T-cell (primary cell): ENCODE measurements at regions of chr18 and their contacts with region 1.

Region 1: GRCh38 chr18:74081966-74082741 is 65.5 kb downstream of the FBXO15 start:
- DNase-seq: peak; percentile 44 to 80 (median 61)
- ATAC-seq: peak; percentile 91 to 97 (median 97)
- H3K4me3 ChIP-seq: peak overlapping the region in 1 of 2 donors; percentile 1
- H3K4me3 Mint-ChIP-seq: peak overlapping the region; percentile 64 to 77 (median 73)
- H3K27ac ChIP-seq: peak overlapping the region; percentile 78
- H3K27ac Mint-ChIP-seq: peak overlapping the region; percentile 95 to 96
- H3K4me1 ChIP-seq: peaks cover 11 to 21% of the 10 kb centered on the region in 2 experiments
- H3K4me1 Mint-ChIP-seq: peaks cover 17 to 19% (median 17%) of the 10 kb centered on the region in 3 donors
- H3K27me3 ChIP-seq: peaks cover 0 to 4% of the 10 kb centered on the region in 2 experiments
- H3K27me3 Mint-ChIP-seq: peaks cover 0 to 4% of the 10 kb centered on the region in 2 donors

Region 2: DNA sequence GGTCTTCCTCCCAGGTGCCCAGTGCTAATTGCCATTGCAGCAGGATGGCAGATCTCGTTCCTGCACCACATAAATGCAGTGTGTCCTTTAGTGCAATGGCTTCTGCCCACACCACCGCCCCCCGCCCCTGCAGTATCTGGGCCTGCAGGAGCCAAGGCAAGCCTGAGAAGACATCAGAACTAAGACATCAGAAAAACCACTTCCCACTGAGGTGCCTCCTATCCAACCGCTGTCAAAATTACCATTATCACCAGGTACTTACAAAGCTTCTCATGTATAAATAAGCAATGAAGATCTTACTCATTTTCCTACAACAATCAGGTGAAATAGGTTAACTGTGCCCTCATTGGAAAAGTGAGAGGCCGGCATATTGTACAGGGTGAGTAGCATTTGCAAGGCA is 163.3 kb before region 1 on chr18:
- CTCF ChIA-PET with region 1: no interaction called
- POLR2A ChIA-PET with region 1: no interaction called
- DNase-seq: no peak
- ATAC-seq: no peak
- H3K4me3 ChIP-seq: no peak overlapping the region
- H3K4me3 Mint-ChIP-seq: no peak overlapping the region
- H3K27ac ChIP-seq: no peak overlapping the region
- H3K27ac Mint-ChIP-seq: no peak overlapping the region
- H3K4me1 ChIP-seq: no peaks in the 10 kb centered on the region
- H3K4me1 Mint-ChIP-seq: no peaks in the 10 kb centered on the region
- H3K27me3 ChIP-seq: peaks cover 0 to 4% of the 10 kb centered on the region in 2 experiments
- H3K27me3 Mint-ChIP-seq: peaks cover 12 to 14% of the 10 kb centered on the region in 2 donors

Region 3: DNA sequence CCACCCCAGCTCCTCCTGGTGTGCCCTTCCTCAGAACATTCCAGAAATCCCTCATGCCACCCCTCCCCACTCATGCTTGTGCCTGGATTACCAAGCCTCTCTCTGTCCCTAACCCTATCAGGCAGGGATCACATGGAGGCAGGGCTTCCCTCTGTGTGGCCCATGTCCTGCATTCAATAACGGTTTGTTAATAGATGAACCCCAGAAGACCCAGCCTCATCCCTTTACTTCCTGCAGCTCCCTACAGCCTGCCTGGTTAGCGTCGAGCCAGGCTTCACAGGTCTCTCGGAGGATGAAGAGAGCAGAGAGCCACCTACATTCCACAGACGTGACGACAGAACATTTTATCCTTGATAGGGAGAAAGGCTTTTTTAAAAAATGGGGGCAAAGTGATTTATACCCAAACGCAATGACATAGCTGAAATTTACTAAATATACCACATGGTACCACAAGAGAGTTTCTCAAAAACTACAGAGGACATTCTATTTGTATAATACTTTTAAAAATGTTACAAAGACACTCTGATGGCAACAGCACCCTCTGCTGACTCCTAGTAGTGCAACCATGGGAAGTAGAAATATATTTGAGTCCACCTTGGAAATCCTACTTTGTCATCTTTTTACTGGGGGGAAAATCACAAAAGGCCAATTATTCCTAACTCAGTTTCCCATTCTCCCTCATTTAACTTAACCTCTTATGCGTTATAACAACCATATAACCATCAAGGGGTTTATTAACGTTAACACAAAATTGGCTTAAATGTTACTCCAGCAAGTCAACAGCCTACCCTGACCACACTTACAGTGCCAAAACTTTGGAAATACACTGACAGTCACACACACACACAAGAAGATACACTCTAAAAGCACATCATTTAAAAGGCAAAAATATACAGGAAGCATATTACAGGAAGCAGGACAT is 34.7 kb after region 1 on chr18:
- CTCF ChIA-PET with region 1: interaction called, 14 to 20 read pairs
- POLR2A ChIA-PET with region 1: no interaction called
- DNase-seq: peak in 21 of 35 experiments; percentile 3 to 59 (median 11)
- ATAC-seq: no peak
- H3K4me3 ChIP-seq: no peak overlapping the region
- H3K4me3 Mint-ChIP-seq: no peak overlapping the region
- H3K27ac ChIP-seq: no peak overlapping the region
- H3K27ac Mint-ChIP-seq: no peak overlapping the region
- H3K4me1 ChIP-seq: no peaks in the 10 kb centered on the region
- H3K4me1 Mint-ChIP-seq: peaks cover 5 to 6% (median 6%) of the 10 kb centered on the region in 3 donors
- H3K27me3 ChIP-seq: peaks cover 0 to 7% of the 10 kb centered on the region in 2 experiments
- H3K27me3 Mint-ChIP-seq: peaks cover 0 to 4% of the 10 kb centered on the region in 2 donors

Region 4: GRCh38 chr18:74242438-74243096 is 160.4 kb after region 1 on chr18:
- CTCF ChIA-PET with region 1: no interaction called
- POLR2A ChIA-PET with region 1: no interaction called
- DNase-seq: no peak
- ATAC-seq: no peak
- H3K4me3 ChIP-seq: no peak overlapping the region
- H3K4me3 Mint-ChIP-seq: no peak overlapping the region
- H3K27ac ChIP-seq: no peak overlapping the region
- H3K27ac Mint-ChIP-seq: no peak overlapping the region
- H3K4me1 ChIP-seq: no peaks in the 10 kb centered on the region
- H3K4me1 Mint-ChIP-seq: no peaks in the 10 kb centered on the region
- H3K27me3 ChIP-seq: peaks cover 0 to 12% of the 10 kb centered on the region in 2 experiments
- H3K27me3 Mint-ChIP-seq: peaks cover 9 to 14% of the 10 kb centered on the region in 2 donors

Region 5: GRCh38 chr18:74342416-74343043 is 260.4 kb after region 1 on chr18:
- CTCF ChIA-PET with region 1: interaction called, 3 to 14 read pairs
- POLR2A ChIA-PET with region 1: no interaction called
- DNase-seq: peak in 16 of 35 experiments; percentile 8 to 71 (median 19)
- ATAC-seq: peak in 1 of 4 experiments; percentile 48
- H3K4me3 ChIP-seq: no peak overlapping the region
- H3K4me3 Mint-ChIP-seq: no peak overlapping the region
- H3K27ac ChIP-seq: no peak overlapping the region
- H3K27ac Mint-ChIP-seq: no peak overlapping the region
- H3K4me1 ChIP-seq: no peaks in the 10 kb centered on the region
- H3K4me1 Mint-ChIP-seq: peaks cover 0 to 2% (median 0%) of the 10 kb centered on the region in 3 donors
- H3K27me3 ChIP-seq: peaks cover 0 to 4% of the 10 kb centered on the region in 2 experiments
- H3K27me3 Mint-ChIP-seq: peaks cover 3% of the 10 kb centered on the region in 2 donors